Activated CD4-positive, alpha-beta T cell treated with anti-CD3 and anti-CD28 coated beads for 36 hours (primary cell): ENCODE measurements at regions of chr10 and their contacts with region 1.

Region 1: DNA sequence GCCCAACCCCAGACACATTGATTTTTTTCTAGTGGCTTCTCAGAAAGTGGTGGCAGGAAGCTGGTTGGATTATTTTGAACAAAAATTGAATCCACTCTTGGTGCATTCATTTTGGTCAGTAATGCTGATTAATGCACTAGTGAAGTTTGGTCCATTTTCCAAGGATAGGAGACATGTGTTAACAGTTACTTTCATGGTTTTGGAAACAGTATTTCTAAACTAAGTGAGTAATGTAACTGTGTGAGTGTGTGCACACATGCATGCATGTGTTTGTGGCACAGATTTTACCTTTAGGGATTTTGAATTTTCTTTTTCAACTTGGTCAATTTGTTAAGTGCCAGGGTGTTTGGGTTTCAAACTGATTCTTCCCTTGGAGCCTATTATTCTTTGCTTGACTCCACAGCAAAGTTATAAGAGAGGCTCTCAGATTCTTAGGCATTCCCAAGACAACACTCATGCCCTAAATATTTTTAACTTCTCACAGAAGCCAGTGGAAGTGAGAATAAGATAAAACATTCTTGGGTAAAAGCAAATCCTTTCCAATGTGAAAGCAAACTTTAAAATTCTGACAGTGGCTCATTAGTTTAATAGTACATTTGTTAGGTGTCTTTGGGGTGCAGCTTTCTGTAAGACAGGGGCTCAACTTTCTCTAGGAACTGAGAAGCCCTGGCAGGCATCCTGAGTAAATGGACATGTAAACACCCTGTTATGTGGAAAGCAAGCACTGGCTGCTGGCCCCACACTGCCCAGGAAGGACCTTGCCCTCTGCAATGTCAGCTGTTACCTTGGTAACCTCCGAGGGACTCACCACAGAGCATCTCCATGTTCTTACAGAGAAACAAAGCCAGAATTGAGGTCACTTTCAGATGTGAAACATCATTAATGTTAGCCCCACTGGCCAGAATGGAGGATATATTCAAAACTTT is 68.4 kb downstream of the ASAH2B start:
- DNase-seq: no peak
- ATAC-seq: no peak
- H3K4me3 Mint-ChIP-seq: no peak overlapping the region
- H3K27ac Mint-ChIP-seq: no peak overlapping the region
- H3K4me1 Mint-ChIP-seq: no peaks in the 10 kb centered on the region
- H3K27me3 Mint-ChIP-seq: peaks cover 5% of the 10 kb centered on the region

Region 2: DNA sequence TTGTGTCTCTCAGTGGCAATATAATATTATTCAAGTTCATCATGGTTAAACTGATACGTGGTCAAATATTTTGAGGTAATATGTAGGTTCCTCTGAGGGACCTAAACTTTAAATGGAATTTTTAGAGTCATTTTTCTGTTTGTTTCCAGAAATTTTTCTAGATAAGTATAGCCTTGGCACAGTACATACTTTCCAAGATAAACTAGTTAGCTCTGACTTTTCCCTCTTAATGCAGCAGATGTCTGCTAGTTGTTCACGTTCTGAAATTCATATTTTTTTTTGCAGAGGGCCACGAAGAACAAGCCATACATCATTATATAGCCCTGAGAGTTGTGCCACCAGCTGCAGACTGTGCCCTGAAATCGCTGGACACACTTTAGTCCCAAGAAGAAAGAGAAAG is 15.7 kb after region 1 on chr10:
- CTCF ChIA-PET with region 1: interaction called, 4 read pairs
- POLR2A ChIA-PET with region 1: no interaction called
- intact Hi-C with region 1: loop called in 1 of 2 experiments (anchors 1 kb)
- DNase-seq: no peak
- ATAC-seq: no peak
- H3K4me3 Mint-ChIP-seq: no peak overlapping the region
- H3K27ac Mint-ChIP-seq: no peak overlapping the region
- H3K4me1 Mint-ChIP-seq: no peaks in the 10 kb centered on the region
- H3K27me3 Mint-ChIP-seq: peaks cover 22% of the 10 kb centered on the region

Region 3: GRCh38 chr10:51297438-51297837 is 489.3 kb after region 1 on chr10:
- CTCF ChIA-PET with region 1: no interaction called
- POLR2A ChIA-PET with region 1: no interaction called
- intact Hi-C with region 1: no loop called
- DNase-seq: no peak
- ATAC-seq: no peak
- H3K4me3 Mint-ChIP-seq: no peak overlapping the region
- H3K27ac Mint-ChIP-seq: no peak overlapping the region
- H3K4me1 Mint-ChIP-seq: no peaks in the 10 kb centered on the region
- H3K27me3 Mint-ChIP-seq: peaks cover 2% of the 10 kb centered on the region